HEK293T (cell line): ENCODE measurements at regions of chr12 and their contacts with region 1.

Region 1: DNA sequence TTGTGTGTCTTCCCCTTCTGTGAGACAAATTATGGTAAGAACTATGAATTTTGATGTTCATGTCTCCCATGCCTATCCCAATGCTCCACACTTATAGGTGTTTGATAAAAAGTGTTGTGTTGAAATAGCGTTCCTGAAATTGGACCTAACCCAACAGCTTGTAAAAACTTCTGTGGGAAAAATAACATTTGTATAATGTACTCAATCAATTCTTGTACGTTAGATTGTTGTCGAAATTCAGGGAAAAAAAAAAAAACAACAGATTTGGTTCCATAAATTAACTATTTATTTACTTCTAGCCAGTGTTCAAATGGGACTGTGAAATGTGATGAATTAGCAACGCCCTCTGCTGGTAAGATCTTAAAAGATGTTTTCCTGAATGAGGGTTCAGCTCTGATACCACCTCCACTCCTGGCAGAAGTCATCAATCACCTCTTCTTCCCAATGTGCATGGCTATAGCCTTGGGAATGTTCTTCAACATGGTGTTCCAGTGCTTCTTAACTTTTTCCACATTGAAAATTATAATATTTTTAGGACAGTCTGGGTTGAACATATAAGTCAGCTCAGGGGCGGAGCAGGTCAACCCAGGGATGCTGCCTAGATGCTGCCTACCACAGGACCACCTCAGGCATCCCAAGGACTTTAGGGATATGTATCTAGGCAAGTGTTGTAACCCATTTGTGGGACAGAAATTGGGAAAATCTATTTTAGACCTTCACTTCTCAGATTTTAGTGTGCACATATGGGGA is 170.6 kb downstream of the OTOGL start:
- DNase-seq: peak; percentile 47

Region 2: GRCh38 chr12:80195074-80195726 is 74.8 kb before region 1 on chr12:
- CTCF ChIA-PET with region 1: interaction called, 25 read pairs
- POLR2A ChIA-PET with region 1: no interaction called
- DNase-seq: peak; percentile 58

Region 3: GRCh38 chr12:80282761-80283160 is 12.8 kb after region 1 on chr12:
- CTCF ChIA-PET with region 1: no interaction called
- POLR2A ChIA-PET with region 1: no interaction called
- DNase-seq: no peak

Region 4: DNA sequence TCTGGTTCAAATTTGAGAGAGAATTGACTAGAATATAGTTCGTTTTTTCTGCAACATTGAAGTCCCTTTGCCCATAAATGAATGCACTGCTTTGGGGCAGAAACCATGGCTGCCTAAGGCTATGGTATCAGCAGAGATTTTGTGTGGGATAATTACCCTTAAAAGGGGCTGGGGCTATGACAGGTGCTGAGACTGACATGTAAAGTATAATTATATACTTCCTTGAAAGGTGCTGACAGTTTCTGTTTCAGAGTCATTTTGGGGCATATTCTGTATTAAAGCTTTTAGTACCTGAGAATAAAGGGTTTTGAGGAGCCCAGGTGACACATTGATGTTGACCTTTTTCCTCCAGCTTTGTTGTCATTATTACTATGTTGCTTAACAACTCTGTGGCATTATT is 23.8 kb after region 1 on chr12:
- CTCF ChIA-PET with region 1: no interaction called
- POLR2A ChIA-PET with region 1: no interaction called
- DNase-seq: no peak